Heart left ventricle (tissue), 16 donors: ENCODE measurements at regions of chr18 and their contacts with region 1.

Region 1: GRCh38 chr18:8721716-8722115 is 16.4 kb downstream of the MTCL1 start:
- DNase-seq: no peak
- ATAC-seq: peak in 1 of 4 donors; percentile 46
- H3K4me3 ChIP-seq: no peak overlapping the region
- H3K27ac ChIP-seq: no peak overlapping the region
- H3K4me1 ChIP-seq: no peaks in the 10 kb centered on the region
- H3K27me3 ChIP-seq: no peaks in the 10 kb centered on the region
- CTCF ChIP-seq: no peak
- POLR2A ChIP-seq: no peak

Region 2: GRCh38 chr18:8813611-8814010 is 91.9 kb after region 1 on chr18:
- intact Hi-C with region 1: no loop called
- DNase-seq: no peak
- ATAC-seq: no peak
- H3K4me3 ChIP-seq: no peak overlapping the region
- H3K27ac ChIP-seq: no peak overlapping the region
- H3K4me1 ChIP-seq: peaks cover 0 to 19% (median 4%) of the 10 kb centered on the region in 12 donors
- H3K27me3 ChIP-seq: no peaks in the 10 kb centered on the region
- CTCF ChIP-seq: no peak
- POLR2A ChIP-seq: no peak

Region 3: DNA sequence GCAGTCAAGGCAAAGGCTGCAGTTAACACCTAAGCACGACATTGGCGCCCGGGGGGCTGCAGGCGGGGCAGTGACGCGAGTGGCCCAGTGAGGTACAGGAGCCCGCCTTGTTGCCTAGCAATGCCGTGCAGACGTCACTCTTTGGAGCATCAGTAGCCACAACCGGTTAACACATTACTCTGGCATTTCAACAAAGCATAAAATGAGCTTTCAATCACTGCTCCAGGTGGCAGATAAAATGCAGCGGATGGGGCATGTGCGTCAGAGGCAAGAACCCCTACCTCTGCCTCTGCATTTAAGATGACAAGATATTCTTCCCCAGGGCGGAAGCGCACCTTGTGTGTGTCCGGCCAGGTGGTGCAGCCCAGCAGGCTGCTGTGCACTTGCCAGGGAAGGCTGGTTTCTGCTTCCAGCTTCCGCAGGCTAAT is 123.0 kb after region 1 on chr18:
- intact Hi-C with region 1: loop called in 1 of 10 experiments (anchors 10 kb)
- DNase-seq: no peak
- ATAC-seq: no peak
- H3K4me3 ChIP-seq: no peak overlapping the region
- H3K27ac ChIP-seq: no peak overlapping the region
- H3K4me1 ChIP-seq: peaks cover 0 to 17% (median 7%) of the 10 kb centered on the region in 12 donors
- H3K27me3 ChIP-seq: peaks cover 0 to 5% (median 0%) of the 10 kb centered on the region in 9 donors
- CTCF ChIP-seq: no peak
- POLR2A ChIP-seq: no peak